ENCODE measurements at regions of chr5 and their contacts with region 1.

Region 1: DNA sequence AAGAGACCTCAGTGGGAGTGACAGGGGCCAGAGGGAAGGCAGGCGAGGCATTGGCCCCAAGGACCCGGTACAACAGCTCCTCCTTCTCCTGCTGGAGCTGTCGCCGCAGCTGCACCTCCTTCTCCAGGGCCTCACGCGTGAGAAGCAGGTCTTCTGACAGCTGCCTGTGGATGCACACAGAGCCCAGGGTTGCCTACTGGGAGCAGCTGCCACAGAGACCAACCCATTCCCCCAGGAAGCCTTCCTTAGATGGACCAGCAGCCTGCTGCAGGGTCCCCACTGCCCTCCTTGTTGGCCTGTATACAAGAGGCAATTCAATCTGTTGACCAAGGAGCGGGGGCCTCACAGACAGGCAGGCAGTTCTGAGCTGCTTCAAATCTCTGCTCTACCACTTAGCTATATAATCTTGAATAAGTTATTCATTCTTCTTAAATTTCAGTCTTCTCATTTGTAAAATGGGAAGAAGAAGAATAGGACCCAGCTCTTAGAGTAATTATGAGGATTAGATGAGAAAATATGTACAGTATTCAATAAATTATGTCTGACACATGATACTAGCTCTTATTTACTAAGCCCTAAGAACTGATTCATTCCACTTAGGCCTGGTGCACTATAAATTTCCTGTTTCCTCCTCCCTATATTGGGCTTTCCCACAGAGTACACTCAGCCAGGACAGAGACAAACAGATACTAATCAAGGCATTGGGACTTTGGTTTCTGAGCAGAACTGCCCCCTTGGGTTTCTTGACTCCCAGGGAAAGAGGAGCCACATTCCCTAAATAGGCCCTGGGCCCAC is 26.1 kb upstream of the ANXA6 start:
- DNase-seq: peak; percentile 4
- H3K4me3 ChIP-seq: no peak overlapping the region
- H3K27me3 ChIP-seq: peaks cover 1% of the 10 kb centered on the region; the same call in 1 of the 2 replicates
- CTCF ChIP-seq: no peak

Region 2: GRCh38 chr5:149775785-149776184 is 1407.9 kb before region 1 on chr5:
- CTCF ChIA-PET with region 1: no interaction called
- POLR2A ChIA-PET with region 1: no interaction called
- DNase-seq: no peak
- H3K4me3 ChIP-seq: no peak overlapping the region
- H3K27me3 ChIP-seq: peaks cover 4% of the 10 kb centered on the region
- CTCF ChIP-seq: peak; percentile 62

Region 3: GRCh38 chr5:151216787-151217488 is 33.3 kb after region 1 on chr5:
- CTCF ChIA-PET with region 1: no interaction called
- POLR2A ChIA-PET with region 1: interaction called, 13 read pairs
- DNase-seq: no peak
- H3K4me3 ChIP-seq: no peak overlapping the region
- H3K27me3 ChIP-seq: peaks cover 2% of the 10 kb centered on the region; the same call in 1 of the 2 replicates
- CTCF ChIP-seq: no peak

Region 4: DNA sequence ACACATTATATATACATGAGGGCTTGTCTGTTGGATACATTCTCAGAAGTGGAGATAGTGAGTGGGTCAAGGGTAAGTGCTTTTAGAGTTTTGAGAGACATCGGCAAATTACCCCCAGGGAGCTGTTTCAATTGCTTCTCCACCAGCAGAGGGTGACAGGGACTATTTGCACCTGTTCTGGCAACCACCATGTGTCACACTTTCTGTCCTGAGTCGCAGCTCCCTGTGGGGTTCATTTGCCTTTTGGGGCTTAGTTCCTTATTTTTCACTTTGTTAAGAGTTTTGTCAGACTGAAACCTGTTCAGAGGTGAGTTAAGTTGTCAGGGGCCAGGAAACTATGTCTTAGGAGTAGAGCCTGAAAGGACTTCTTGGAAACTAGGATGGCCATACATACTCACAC is 243.6 kb after region 1 on chr5:
- CTCF ChIA-PET with region 1: no interaction called
- POLR2A ChIA-PET with region 1: no interaction called
- DNase-seq: no peak
- H3K4me3 ChIP-seq: no peak overlapping the region
- H3K27me3 ChIP-seq: 0 out of 2 replicates have a peak, but pooled peaks cover 1% of the 10 kb centered on the region
- CTCF ChIP-seq: no peak

Measured in BJ (cell line).